MCF 10A (cell line): ENCODE measurements at regions of chr14 and their contacts with region 1.

Region 1: GRCh38 chr14:70934502-70935134 is 27.4 kb downstream of the PCNX1 start:
- DNase-seq: no peak
- H3K4me3 Mint-ChIP-seq: peak overlapping the region; percentile 1
- H3K27ac Mint-ChIP-seq: peak overlapping the region; percentile 25
- H3K4me1 Mint-ChIP-seq: peaks cover 18% of the 10 kb centered on the region
- H3K27me3 Mint-ChIP-seq: no peaks in the 10 kb centered on the region
- CTCF ChIP-seq: no peak

Region 2: DNA sequence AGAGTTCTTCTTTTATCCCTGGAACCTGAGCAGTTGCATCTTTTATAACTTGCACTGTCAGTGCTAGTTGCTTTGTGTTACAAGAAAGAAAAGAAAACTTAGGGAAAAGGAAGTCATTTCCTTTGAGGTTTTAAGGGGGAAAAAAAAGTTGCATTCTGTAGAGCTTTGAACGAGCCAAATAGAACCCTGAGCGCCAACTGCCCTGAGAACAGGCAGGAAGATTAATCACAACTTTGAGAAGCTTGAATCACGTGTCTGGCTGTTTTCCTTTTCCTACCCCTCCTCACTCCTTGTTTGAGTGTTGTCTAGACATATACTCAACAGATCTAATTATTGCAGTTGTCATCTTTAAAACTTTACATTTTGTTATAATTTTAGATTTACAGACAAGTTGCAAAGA is 14.8 kb before region 1 on chr14:
- CTCF ChIA-PET with region 1: interaction called, 4 read pairs
- POLR2A ChIA-PET with region 1: interaction called, 16 read pairs
- intact Hi-C with region 1: no loop called
- DNase-seq: peak; percentile 49
- H3K4me3 Mint-ChIP-seq: peak overlapping the region; percentile 7
- H3K27ac Mint-ChIP-seq: peak overlapping the region; percentile 80
- H3K4me1 Mint-ChIP-seq: peaks cover 51% of the 10 kb centered on the region
- H3K27me3 Mint-ChIP-seq: no peaks in the 10 kb centered on the region
- CTCF ChIP-seq: no peak

Region 3: DNA sequence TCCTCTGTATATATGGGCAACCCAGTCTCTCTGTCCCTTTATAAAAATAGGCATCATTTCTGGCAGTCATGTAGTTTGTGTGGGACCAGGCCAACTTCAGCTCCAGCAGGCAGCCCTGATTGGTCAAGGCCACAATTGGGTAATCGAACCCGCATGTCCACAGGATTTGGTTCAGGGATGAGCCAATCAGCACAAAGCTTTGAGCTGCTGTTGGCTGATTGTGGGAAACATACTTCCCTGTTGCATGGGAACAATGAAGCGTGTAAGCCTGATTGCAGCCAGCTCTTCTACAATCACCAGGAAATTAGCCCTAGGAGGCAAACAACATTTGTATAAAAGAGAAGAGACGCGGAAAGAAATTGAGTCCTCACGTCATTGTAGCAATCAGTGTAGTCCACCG is 301.3 kb after region 1 on chr14:
- CTCF ChIA-PET with region 1: no interaction called
- POLR2A ChIA-PET with region 1: no interaction called
- intact Hi-C with region 1: no loop called
- DNase-seq: no peak
- H3K4me3 Mint-ChIP-seq: no peak overlapping the region
- H3K27ac Mint-ChIP-seq: no peak overlapping the region
- H3K4me1 Mint-ChIP-seq: no peaks in the 10 kb centered on the region
- H3K27me3 Mint-ChIP-seq: no peaks in the 10 kb centered on the region
- CTCF ChIP-seq: no peak